Caco-2 (cell line): ENCODE measurements at regions of chr2 and their contacts with region 1.

Region 1: DNA sequence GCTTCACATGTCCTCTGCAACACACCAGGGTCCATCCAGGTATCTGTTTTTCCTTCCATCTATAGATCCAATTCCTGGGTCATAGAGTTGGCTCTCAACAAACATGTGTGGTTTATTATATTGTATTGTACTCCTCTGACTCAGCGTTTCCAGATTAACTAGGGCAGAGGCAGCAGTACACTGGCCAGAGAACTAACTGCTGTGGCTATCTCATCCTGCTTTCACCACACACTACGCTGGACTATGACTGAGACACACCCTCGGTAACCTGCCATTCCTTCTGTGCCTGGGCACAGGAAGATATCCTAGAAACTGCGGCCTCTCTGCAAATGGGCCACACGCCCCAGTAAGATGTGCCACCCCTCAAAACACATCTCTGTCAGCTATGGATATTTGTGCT is 159.8 kb upstream of the STK17B start:
- DNase-seq: no peak
- H3K4me3 ChIP-seq: no peak overlapping the region
- H3K4me3 Mint-ChIP-seq: no peak overlapping the region
- H3K27ac Mint-ChIP-seq: no peak overlapping the region
- H3K4me1 ChIP-seq: peaks cover 16% of the 10 kb centered on the region
- H3K4me1 Mint-ChIP-seq: peaks cover 19% of the 10 kb centered on the region
- H3K27me3 ChIP-seq: no peaks in the 10 kb centered on the region
- H3K27me3 Mint-ChIP-seq: no peaks in the 10 kb centered on the region
- CTCF ChIP-seq: no peak

Region 2: GRCh38 chr2:196171248-196171871 is 159.8 kb before region 1 on chr2 and contains the start of gene STK17B:
- CTCF ChIA-PET with region 1: no interaction called
- POLR2A ChIA-PET with region 1: interaction called, 3 read pairs
- intact Hi-C with region 1: loop called (anchors 2 kb)
- DNase-seq: peak; percentile 96 to 97
- H3K4me3 ChIP-seq: peak within 1 kb of the TSS; percentile 96
- H3K4me3 Mint-ChIP-seq: peak within 1 kb of the TSS; percentile 97
- H3K27ac Mint-ChIP-seq: peak within 1 kb of the TSS; percentile 83
- H3K4me1 ChIP-seq: peaks cover 19% of the 10 kb centered on the region
- H3K4me1 Mint-ChIP-seq: peaks cover 30% of the 10 kb centered on the region
- H3K27me3 ChIP-seq: no peaks in the 10 kb centered on the region
- H3K27me3 Mint-ChIP-seq: no peaks in the 10 kb centered on the region
- CTCF ChIP-seq: peak in 1 of 2 experiments; percentile 0
- total RNA-seq, gene STK17B: 54.7 and 58.0 TPM in 2 replicates

Region 3: DNA sequence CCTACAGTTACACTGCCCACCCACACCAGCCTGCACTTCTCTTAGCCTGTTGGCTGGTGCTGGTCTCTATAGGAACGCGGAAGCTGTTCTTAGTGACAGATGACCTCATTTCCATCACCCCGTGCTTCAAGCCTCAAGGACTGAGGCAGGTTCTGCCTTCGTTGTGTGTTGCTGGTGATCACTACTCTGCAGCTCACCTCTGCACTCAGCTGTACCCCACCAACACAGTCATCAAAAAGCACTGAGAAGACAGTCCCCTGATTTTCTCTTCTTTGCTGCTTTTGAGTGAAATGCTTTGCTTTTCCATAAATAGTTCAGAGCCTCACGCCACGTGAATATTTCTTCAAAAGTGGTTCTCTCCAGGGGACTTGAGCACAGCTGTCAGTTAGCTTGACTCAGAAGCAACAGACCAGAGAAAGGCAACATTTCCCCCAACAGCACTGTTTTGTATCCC is 82.7 kb after region 1 on chr2:
- CTCF ChIA-PET with region 1: no interaction called
- POLR2A ChIA-PET with region 1: no interaction called
- intact Hi-C with region 1: no loop called
- DNase-seq: no peak
- H3K4me3 ChIP-seq: no peak overlapping the region
- H3K4me3 Mint-ChIP-seq: no peak overlapping the region
- H3K27ac Mint-ChIP-seq: no peak overlapping the region
- H3K4me1 ChIP-seq: no peaks in the 10 kb centered on the region
- H3K4me1 Mint-ChIP-seq: no peaks in the 10 kb centered on the region
- H3K27me3 ChIP-seq: no peaks in the 10 kb centered on the region
- H3K27me3 Mint-ChIP-seq: peaks cover 4% of the 10 kb centered on the region
- CTCF ChIP-seq: no peak

Region 4: DNA sequence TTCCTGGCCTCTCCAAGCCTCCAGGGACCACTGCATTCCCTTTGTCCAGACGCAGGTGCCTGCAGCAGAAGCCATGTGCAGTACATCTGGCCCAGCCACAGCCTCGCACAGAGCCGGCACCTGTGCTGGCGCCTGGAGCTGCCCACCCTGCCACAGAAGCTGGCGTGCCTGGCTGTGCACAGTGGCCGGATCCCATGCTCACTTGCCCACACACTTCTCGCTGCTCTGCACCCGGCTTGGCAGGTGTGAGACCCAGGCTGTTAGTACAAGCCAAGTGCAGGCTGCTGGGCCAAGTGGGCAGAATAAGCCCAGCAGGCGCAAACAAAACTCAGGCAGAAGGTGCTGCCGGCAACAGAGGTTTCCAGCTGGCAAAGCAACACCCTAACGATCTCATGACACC is 183.9 kb after region 1 on chr2:
- CTCF ChIA-PET with region 1: no interaction called
- POLR2A ChIA-PET with region 1: no interaction called
- intact Hi-C with region 1: no loop called
- DNase-seq: no peak
- H3K4me3 ChIP-seq: no peak overlapping the region
- H3K4me3 Mint-ChIP-seq: no peak overlapping the region
- H3K27ac Mint-ChIP-seq: no peak overlapping the region
- H3K4me1 ChIP-seq: no peaks in the 10 kb centered on the region
- H3K4me1 Mint-ChIP-seq: no peaks in the 10 kb centered on the region
- H3K27me3 ChIP-seq: no peaks in the 10 kb centered on the region
- H3K27me3 Mint-ChIP-seq: peaks cover 3% of the 10 kb centered on the region
- CTCF ChIP-seq: no peak